Activated naive CD4-positive, alpha-beta T cell treated with anti-CD3 and anti-CD28 coated beads for 36 hours (primary cell): ENCODE measurements at regions of chr17 and their contacts with region 1.

Region 1: DNA sequence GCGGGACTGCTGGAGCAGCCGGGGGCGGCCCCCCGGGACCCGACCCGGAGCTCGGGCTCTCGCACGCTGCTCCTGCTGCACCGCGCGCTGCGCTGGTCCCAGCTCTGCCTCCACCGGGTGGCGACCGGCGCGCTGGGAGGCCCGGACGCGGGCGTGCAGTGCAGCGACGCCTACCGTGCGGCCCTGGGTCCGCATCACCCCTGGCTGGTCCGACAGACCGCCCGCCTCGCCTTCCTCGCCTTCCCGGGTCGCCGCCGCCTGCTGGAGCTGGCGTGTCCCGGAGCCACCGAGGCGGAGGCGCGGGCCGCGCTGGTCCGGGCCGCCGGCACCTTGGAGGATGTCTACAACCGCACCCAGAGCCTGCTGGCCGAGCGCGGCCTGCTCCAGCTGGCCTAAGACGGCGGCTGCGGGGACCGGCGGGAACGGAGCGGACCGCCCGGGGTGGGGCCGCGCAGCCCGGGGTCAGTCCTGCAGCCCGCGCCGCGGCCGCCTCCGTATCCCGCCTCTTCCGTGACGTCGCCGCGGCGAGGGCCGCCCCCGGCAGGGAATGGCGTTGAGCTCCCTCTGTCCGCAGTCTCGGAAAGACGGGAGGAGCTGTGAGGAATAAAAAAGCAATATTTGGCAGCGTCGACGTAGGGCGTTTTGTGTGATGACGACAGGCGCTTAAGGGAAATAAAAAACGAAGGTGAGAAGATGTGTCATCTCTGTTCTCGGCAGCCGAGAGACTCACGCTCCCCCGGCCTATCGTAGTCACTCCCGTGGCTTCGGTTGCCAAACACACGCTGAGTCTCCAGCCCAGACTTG is 1.3 kb downstream of the GLTPD2 start:
- DNase-seq: peak; percentile 93
- H3K4me3 Mint-ChIP-seq: peak overlapping the region; percentile 85
- H3K27ac Mint-ChIP-seq: peak overlapping the region; percentile 95
- H3K4me1 Mint-ChIP-seq: peaks cover 30% of the 10 kb centered on the region
- H3K27me3 Mint-ChIP-seq: peaks cover 38% of the 10 kb centered on the region

Region 2: GRCh38 chr17:4696437-4696805 is 93.7 kb before region 1 on chr17:
- CTCF ChIA-PET with region 1: no interaction called
- intact Hi-C with region 1: no loop called
- DNase-seq: no peak
- H3K4me3 Mint-ChIP-seq: no peak overlapping the region
- H3K27ac Mint-ChIP-seq: peak overlapping the region; percentile 80
- H3K4me1 Mint-ChIP-seq: peaks cover 44% of the 10 kb centered on the region
- H3K27me3 Mint-ChIP-seq: no peaks in the 10 kb centered on the region

Region 3: GRCh38 chr17:4733073-4733531 is 57.0 kb before region 1 on chr17:
- CTCF ChIA-PET with region 1: interaction called, 4 read pairs
- intact Hi-C with region 1: loop called (anchors 1 kb)
- DNase-seq: peak; percentile 39
- H3K4me3 Mint-ChIP-seq: no peak overlapping the region
- H3K27ac Mint-ChIP-seq: no peak overlapping the region
- H3K4me1 Mint-ChIP-seq: peaks cover 32% of the 10 kb centered on the region
- H3K27me3 Mint-ChIP-seq: peaks cover 1% of the 10 kb centered on the region

Region 4: GRCh38 chr17:4739122-4740024 is 50.7 kb before region 1 on chr17 and contains the starts of genes CXCL16 and ZMYND15:
- CTCF ChIA-PET with region 1: interaction called, 5 read pairs
- intact Hi-C with region 1: loop called (anchors 2 kb)
- DNase-seq: peak; percentile 52
- H3K4me3 Mint-ChIP-seq: peak within 1 kb of the TSS; percentile 72
- H3K27ac Mint-ChIP-seq: no peak within 1 kb of the TSS
- H3K4me1 Mint-ChIP-seq: peaks cover 18% of the 10 kb centered on the region
- H3K27me3 Mint-ChIP-seq: peaks cover 20% of the 10 kb centered on the region
- total RNA-seq, gene CXCL16: 2.0 to 2.3 TPM
- total RNA-seq, gene ZMYND15: 0.17 TPM in 1 of 2 experiments, not detected in the other

Region 5: GRCh38 chr17:4806777-4807604 is 16.9 kb after region 1 on chr17 and contains the start of gene PLD2:
- CTCF ChIA-PET with region 1: interaction called, 10 read pairs
- intact Hi-C with region 1: loop called (anchors 1 kb)
- DNase-seq: peak; percentile 91
- H3K4me3 Mint-ChIP-seq: peak within 1 kb of the TSS; percentile 75
- H3K27ac Mint-ChIP-seq: peak within 1 kb of the TSS; percentile 36
- H3K4me1 Mint-ChIP-seq: peaks cover 10% of the 10 kb centered on the region
- H3K27me3 Mint-ChIP-seq: no peaks in the 10 kb centered on the region
- total RNA-seq, gene PLD2: 17.4 to 17.6 TPM

Region 6: GRCh38 chr17:4833178-4833940 is 43.3 kb after region 1 on chr17 and contains the start of gene MINK1:
- CTCF ChIA-PET with region 1: interaction called, 9 read pairs
- intact Hi-C with region 1: loop called (anchors 1 kb)
- DNase-seq: peak; percentile 82
- H3K4me3 Mint-ChIP-seq: peak within 1 kb of the TSS; percentile 85
- H3K27ac Mint-ChIP-seq: peak within 1 kb of the TSS; percentile 83
- H3K4me1 Mint-ChIP-seq: peaks cover 27% of the 10 kb centered on the region
- H3K27me3 Mint-ChIP-seq: no peaks in the 10 kb centered on the region
- total RNA-seq, gene MINK1: 49.1 to 50.4 TPM

Region 7: GRCh38 chr17:4891411-4892342 is 101.6 kb after region 1 on chr17:
- CTCF ChIA-PET with region 1: interaction called, 7 read pairs
- intact Hi-C with region 1: loop called (anchors 1 kb)
- DNase-seq: no peak
- H3K4me3 Mint-ChIP-seq: no peak overlapping the region
- H3K27ac Mint-ChIP-seq: no peak overlapping the region
- H3K4me1 Mint-ChIP-seq: no peaks in the 10 kb centered on the region
- H3K27me3 Mint-ChIP-seq: no peaks in the 10 kb centered on the region

Region 8: DNA sequence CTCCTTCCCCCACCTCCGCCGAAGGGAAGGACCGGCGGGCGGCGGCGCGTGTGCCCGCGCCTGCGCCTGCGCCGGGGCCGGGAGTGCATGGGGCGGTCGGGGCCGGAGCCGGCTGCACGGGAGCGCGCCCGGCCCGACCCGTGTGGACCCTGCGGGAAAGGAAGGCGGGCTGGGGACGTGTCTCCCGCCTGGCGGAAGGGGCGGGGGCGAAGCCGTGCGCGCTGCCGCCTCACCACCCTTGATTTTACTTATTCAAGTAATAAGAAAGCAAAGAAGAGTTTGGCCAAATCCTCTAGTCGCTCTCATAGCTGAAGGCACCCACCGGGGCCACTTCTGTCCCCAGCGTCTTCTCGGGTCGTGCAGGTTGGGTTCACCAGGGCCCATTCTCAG is 158.8 kb after region 1 on chr17:
- CTCF ChIA-PET with region 1: no interaction called
- intact Hi-C with region 1: loop called (anchors 1 kb)
- DNase-seq: peak; percentile 78
- H3K4me3 Mint-ChIP-seq: peak overlapping the region; percentile 97
- H3K27ac Mint-ChIP-seq: peak overlapping the region; percentile 99
- H3K4me1 Mint-ChIP-seq: peaks cover 35% of the 10 kb centered on the region
- H3K27me3 Mint-ChIP-seq: no peaks in the 10 kb centered on the region